ENCODE measurements at regions of chr5 and their contacts with region 1.

Region 1: DNA sequence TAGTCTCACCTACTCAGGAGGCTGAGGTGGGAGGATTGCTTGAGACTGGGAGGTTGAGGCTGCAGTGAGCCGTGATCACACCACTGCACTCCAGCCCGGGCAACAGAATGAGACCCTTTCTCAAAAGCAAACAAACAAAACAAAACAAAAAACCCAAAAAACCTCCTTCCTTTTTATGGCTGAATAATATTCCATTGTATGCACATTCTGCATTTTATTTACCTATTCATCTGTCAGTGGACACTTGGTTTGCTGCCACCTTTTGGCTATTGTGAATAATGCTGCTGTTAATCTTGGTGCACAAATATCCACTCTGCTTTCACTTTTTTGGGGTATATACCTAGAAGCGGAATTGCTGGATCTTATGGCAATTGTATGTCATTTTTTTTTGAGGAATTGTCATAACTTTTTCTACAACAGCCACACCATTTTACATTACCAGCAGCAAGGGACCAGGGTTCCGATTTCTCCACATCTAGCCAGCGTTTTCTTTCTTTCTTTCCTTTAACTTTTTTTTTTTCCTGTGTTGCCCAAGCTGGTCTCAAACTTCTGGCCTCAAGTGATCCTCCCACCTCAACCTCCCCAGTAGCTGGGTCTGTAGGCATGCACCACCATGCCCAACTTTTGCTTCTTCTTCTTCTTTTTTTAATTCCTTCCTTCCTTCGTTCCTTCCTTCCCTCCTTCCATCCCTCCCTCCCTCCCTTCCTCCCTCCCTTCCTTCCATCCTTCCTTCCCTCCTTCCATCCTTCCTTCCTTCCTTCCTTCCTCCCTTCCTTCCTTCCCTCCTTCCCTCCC is 30.6 kb downstream of the NKX2-5 start:
- DNase-seq: no peak
- CTCF ChIP-seq: peak; percentile 77

Region 2: DNA sequence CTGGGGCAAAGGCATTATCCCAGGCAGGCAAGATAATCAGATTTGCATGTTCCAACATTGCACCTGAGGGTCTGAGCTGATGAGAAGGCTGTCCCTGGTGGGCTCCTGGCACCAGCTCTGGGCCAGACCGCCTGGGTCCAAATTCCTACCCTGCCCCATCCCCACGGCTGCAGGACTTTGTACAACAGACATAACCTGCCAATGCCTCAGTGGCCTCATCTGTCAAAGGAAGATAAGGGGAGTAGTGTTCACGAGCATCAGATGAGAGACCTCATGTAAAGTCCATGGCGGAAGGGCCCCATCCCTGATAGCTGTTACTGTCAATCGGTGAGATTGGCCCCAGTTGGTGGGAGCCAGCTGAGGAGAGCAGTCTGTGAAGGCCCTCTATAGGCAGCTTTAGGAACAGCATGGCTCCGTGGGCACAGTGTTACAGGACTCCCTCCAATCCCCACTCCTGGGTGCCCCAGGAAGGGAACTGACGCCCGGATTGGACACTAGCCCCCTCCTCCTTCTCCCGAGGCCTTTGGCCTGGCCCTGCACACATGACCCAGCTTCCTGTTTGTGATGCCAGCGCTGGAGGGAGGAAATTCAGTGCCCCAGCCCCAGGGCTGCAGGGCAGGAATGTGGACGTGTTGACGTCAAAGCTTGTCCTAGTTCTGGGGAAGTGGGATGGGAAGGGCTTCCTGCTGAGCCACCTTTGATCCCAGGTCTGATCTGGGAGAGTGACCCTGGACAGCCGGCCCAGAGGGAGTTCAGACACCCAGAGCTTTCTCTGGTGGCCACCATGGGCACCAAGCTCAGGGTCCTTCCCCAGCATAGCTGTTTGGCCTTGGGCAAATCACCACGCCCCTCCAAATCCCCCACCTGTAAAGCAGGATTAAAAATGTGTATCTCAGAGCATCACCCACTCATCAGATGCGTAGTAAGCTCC is 489.6 kb before region 1 on chr5:
- in situ Hi-C with region 1: loop called (anchors 25 kb)
- DNase-seq: peak; percentile 79
- CTCF ChIP-seq: peak; percentile 79